ENCODE measurements at regions of chr2 and their contacts with region 1.

Region 1: GRCh38 chr2:9813312-9814133 is 29.8 kb upstream of the TAF1B start:
- DNase-seq: peak; percentile 61
- H3K4me3 ChIP-seq: no peak overlapping the region
- H3K27ac ChIP-seq: no peak overlapping the region
- H3K4me1 ChIP-seq: peaks cover 6% of the 10 kb centered on the region
- H3K27me3 ChIP-seq: no peaks in the 10 kb centered on the region
- CTCF ChIP-seq: peak; percentile 96 to 97
- POLR2A ChIP-seq: no peak

Region 2: GRCh38 chr2:9565436-9566153 is 247.9 kb before region 1 on chr2:
- CTCF ChIA-PET with region 1: no interaction called
- POLR2A ChIA-PET with region 1: no interaction called
- dilution Hi-C with region 1: no loop called
- intact Hi-C with region 1: no loop called
- DNase-seq: peak; percentile 94
- H3K4me3 ChIP-seq: no peak overlapping the region
- H3K27ac ChIP-seq: peak overlapping the region; percentile 44
- H3K4me1 ChIP-seq: peaks cover 10% of the 10 kb centered on the region
- H3K27me3 ChIP-seq: no peaks in the 10 kb centered on the region
- CTCF ChIP-seq: no peak
- POLR2A ChIP-seq: no peak

Region 3: DNA sequence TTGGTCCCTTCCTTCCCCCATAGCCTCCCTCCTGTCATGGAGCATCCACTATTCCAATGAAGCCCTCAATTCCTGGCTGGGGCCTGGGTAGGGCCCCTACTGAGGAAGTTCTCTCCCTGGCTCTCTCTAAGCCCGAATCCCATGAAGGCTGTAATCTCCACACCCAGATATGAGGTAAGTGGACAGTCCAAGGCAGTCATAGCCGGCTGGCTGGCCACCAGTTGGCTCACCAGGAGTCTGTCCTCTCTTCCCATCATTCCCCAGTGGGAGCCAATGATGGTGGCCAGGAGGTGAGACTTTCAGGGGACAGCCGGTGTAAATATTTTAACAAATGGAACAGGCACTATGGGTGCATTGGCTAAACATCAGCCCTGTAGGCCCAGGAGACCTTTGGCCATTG is 23.0 kb after region 1 on chr2:
- CTCF ChIA-PET with region 1: interaction called, 28 read pairs
- POLR2A ChIA-PET with region 1: no interaction called
- dilution Hi-C with region 1: no loop called
- intact Hi-C with region 1: no loop called
- DNase-seq: no peak
- H3K4me3 ChIP-seq: no peak overlapping the region
- H3K27ac ChIP-seq: no peak overlapping the region
- H3K4me1 ChIP-seq: no peaks in the 10 kb centered on the region
- H3K27me3 ChIP-seq: peaks cover 4% of the 10 kb centered on the region in 2 experiments
- CTCF ChIP-seq: no peak
- POLR2A ChIP-seq: no peak

Region 4: DNA sequence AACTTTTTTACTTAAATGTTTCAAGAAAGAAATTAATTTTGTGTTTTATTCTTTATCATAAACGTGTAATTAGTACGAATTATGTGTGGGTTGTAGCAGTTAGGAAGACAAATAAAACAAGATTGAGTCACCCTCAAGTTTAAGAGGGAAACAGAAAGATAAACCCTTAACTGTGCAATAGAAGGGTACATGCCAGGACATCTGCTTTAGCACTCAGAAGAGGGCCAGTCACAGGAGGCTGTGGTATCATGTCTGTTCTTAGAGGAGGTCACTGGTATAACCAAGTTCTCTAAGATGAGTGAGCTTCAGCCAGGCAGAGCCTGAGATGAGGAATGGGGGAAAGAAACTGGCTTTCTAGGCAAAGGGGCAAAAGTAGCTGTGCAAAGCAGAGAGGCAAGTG is 95.6 kb after region 1 on chr2:
- CTCF ChIA-PET with region 1: interaction called, 23 read pairs
- POLR2A ChIA-PET with region 1: no interaction called
- dilution Hi-C with region 1: no loop called
- intact Hi-C with region 1: no loop called
- DNase-seq: no peak
- H3K4me3 ChIP-seq: no peak overlapping the region
- H3K27ac ChIP-seq: no peak overlapping the region
- H3K4me1 ChIP-seq: no peaks in the 10 kb centered on the region
- H3K27me3 ChIP-seq: no peaks in the 10 kb centered on the region
- CTCF ChIP-seq: no peak
- POLR2A ChIP-seq: no peak

Region 5: GRCh38 chr2:9990735-9991134 is 177.2 kb after region 1 on chr2:
- CTCF ChIA-PET with region 1: interaction called, 65 read pairs
- POLR2A ChIA-PET with region 1: no interaction called
- dilution Hi-C with region 1: no loop called
- intact Hi-C with region 1: loop called (anchors 5 kb)
- DNase-seq: peak; percentile 26
- H3K4me3 ChIP-seq: no peak overlapping the region
- H3K27ac ChIP-seq: no peak overlapping the region
- H3K4me1 ChIP-seq: peaks cover 46% of the 10 kb centered on the region
- H3K27me3 ChIP-seq: no peaks in the 10 kb centered on the region
- CTCF ChIP-seq: no peak
- POLR2A ChIP-seq: no peak

Region 6: DNA sequence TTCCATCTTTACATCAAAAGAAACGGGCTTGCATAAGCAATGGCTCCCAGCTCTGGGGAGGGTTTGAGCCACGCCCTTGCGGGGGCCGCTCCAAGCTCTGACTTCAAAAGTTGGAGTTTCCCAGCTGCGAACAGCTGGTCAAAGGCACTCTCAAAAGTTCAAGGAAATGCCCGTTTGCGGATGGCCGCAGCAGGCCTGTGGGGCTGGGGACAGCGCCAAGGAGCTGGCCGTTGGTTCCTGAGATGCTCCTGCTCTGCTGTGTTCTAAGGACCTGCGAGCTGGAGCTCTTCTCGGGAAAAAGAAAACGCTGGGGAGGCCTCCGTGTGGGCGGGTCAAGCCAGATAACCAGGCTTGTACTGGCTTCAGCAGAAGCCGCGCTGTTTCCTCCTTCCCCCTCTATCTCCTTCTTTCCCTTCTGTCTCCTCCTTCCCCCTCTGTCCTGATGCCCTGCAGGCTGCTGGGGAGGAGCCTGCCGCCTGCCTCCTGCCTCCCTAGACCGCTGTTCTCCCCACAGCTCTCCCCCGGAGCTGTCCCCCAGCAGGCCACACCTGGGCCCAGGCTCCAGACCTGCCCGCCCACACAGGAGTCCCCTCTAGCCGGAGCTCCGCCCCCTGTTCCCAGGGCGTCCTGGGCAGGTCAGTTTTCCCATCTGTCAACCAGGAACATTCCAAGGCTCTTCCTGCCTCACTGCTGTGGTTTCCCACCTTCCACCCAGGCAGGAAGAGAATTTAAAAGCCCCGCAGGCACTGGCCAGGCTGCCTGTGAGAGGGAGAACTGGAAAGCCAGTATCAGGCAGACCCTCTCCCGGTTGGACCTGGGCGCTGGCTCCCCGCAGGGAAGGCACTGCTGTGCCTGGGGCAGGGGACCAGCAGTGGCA is 243.9 kb after region 1 on chr2:
- CTCF ChIA-PET with region 1: interaction called, 161 read pairs
- POLR2A ChIA-PET with region 1: no interaction called
- dilution Hi-C with region 1: no loop called
- intact Hi-C with region 1: no loop called
- DNase-seq: peak; percentile 31
- H3K4me3 ChIP-seq: no peak overlapping the region
- H3K27ac ChIP-seq: no peak overlapping the region
- H3K4me1 ChIP-seq: peaks cover 4% of the 10 kb centered on the region
- H3K27me3 ChIP-seq: no peaks in the 10 kb centered on the region
- CTCF ChIP-seq: no peak
- POLR2A ChIP-seq: no peak